AG04449 (cell line): ENCODE measurements at regions of chr15 and their contacts with region 1.

Region 1: DNA sequence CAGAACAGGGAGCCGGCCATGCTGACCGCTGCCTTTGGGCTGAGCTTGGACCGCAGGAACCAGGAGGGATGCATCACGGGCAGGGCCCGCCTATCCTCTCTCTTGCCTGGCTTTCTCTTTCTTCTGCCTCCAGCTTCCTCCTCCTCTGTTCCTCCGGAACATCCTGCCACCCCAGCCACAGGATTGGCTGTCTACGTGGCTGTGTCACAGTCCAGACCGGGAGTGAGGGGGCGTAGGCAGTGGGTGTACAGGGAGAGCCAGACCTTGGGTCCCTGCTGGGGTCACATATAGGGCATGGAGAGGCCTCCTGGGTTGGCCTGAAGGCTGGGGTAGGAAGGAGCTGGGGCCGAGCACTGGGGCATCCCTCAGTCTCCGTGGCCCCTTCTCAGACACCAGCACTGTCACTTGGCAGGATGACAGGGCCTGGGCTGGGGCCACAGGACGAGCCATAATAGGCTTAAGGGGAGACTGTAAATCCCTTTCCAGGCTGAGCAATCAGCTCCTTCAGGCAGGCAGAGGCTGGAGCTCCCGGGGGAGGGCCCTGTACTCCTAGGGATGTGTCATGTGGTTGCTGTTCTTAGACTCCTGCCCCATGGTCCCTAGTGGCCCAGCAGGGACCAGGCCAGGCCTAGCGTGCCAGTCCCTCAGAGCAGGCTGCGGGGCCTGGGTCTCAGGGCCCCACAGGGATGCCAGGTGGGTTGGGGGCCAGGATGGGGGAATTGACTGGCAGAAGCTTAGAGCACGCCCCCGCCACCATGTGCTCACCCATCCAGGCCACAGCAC is 25.4 kb downstream of the LINGO1 start:
- DNase-seq: no peak
- H3K4me3 ChIP-seq: no peak overlapping the region
- CTCF ChIP-seq: no peak

Region 2: GRCh38 chr15:77617476-77618230 is 10.4 kb after region 1 on chr15:
- CTCF ChIA-PET with region 1: interaction called, 76 read pairs
- POLR2A ChIA-PET with region 1: no interaction called
- DNase-seq: no peak
- H3K4me3 ChIP-seq: no peak overlapping the region
- CTCF ChIP-seq: peak; percentile 29